Activated CD8-positive, alpha-beta memory T cell treated with anti-CD3 and anti-CD28 coated beads, Interleukin-2, amount 10 ng/mL, durations not matched to agents 7 days and 5 days (primary cell): ENCODE measurements at regions of chr11 and their contacts with region 1.

Region 1: GRCh38 chr11:83193315-83194280 is at the start of gene ANKRD42:
- DNase-seq: peak; percentile 92
- ATAC-seq: peak; percentile 82
- H3K4me3 Mint-ChIP-seq: peak within 1 kb of the TSS; percentile 98
- H3K27ac Mint-ChIP-seq: peak within 1 kb of the TSS; percentile 97
- H3K4me1 Mint-ChIP-seq: peaks cover 34% of the 10 kb centered on the region
- H3K27me3 Mint-ChIP-seq: no peaks in the 10 kb centered on the region
- total RNA-seq, gene ANKRD42: 1.6 to 1.9 TPM

Region 2: GRCh38 chr11:82978422-82979099 is 215.0 kb before region 1 on chr11:
- CTCF ChIA-PET with region 1: no interaction called
- DNase-seq: no peak
- ATAC-seq: peak; percentile 84
- H3K4me3 Mint-ChIP-seq: peak overlapping the region; percentile 11
- H3K27ac Mint-ChIP-seq: peak overlapping the region; percentile 44
- H3K4me1 Mint-ChIP-seq: peaks cover 25% of the 10 kb centered on the region
- H3K27me3 Mint-ChIP-seq: no peaks in the 10 kb centered on the region

Region 3: DNA sequence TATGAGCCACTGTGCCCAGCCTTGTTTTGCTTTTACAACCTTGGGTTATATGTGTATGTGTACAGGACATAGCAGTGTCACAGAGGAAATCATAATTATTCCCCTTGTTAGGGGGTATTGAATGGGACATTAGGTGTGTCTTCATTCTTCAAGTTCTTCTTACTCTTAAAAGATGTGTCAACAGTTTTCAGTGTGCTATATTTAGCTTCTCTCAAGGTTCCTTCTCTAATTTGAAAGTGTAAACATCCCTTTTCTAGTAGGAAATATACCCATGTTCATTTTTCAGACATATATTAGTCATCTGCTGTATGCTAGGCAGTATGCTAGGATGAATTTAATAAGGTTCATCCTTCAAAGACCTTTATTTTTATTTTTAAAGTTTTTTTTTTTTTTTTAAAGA is 19.6 kb before region 1 on chr11:
- CTCF ChIA-PET with region 1: no interaction called
- DNase-seq: no peak
- ATAC-seq: peak; percentile 31
- H3K4me3 Mint-ChIP-seq: no peak overlapping the region
- H3K27ac Mint-ChIP-seq: peak overlapping the region; percentile 19
- H3K4me1 Mint-ChIP-seq: peaks cover 54% of the 10 kb centered on the region
- H3K27me3 Mint-ChIP-seq: no peaks in the 10 kb centered on the region

Region 4: DNA sequence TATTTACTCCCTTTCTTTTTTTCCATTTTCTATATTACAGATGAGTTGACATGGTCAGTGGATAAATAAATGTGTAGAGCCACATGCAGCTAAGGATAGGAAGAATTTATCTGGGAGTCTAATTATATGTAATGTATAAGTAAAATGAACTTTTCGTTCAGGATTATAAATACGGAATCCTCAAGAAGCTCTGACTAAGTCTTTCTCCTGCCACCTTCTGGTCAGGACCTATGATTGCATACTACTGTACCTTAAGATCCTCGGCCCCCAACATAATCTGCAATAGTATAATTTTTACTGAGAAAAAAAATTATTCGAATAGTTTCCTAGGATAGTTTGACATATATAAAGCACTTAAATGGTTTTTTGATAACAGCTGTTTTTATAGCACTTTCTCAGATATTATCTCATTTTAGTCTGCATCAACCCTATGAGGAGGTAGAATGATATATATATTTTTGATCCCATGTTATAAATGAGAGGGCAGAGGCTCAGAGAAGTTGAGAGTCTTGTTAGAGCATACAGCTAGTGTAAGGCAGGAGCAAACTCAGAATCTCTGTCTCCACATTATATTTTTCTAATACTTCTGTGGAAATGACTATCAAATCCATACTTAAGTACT is 56.5 kb after region 1 on chr11:
- CTCF ChIA-PET with region 1: interaction called, 12 read pairs
- DNase-seq: no peak
- ATAC-seq: peak; percentile 79
- H3K4me3 Mint-ChIP-seq: no peak overlapping the region
- H3K27ac Mint-ChIP-seq: no peak overlapping the region
- H3K4me1 Mint-ChIP-seq: peaks cover 10% of the 10 kb centered on the region
- H3K27me3 Mint-ChIP-seq: no peaks in the 10 kb centered on the region